GM12878 (cell line): ENCODE measurements at regions of chr10 and their contacts with region 1.

Region 1: DNA sequence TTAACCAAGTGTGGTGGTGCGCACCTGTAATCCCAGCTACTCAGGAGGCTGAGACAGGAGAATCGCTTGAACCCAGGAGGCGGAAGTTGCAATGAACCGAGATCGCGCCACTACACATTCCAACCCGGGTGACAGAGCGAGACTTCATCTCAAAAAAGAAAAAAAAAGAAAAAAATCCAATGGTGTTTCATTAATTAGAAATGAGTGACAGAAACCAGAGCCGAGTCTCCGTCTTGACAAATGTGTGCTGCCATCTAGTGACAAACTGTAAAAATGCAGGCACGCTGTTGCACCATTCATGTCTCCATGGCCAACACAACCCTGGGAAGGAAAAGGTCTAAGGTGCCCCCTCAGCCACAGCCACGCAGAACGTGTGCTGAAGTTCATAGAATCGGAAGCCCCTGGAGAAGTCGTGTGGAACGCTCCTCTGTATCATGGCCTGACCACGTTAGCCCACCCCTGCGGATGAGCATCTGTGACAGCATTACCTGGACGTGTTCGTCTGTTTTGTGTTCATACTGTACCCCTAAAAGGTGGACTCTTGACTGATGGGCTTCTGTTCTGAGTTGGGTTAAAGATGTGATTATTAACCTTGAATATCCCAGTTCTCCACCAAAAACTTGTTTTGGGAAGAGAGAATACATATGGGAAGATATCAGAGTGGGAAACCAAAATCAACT is 94.9 kb downstream of the LYZL2 start:
- DNase-seq: no peak
- ATAC-seq: peak; percentile 56
- H3K4me3 ChIP-seq: no peak overlapping the region
- H3K27ac ChIP-seq: no peak overlapping the region
- H3K4me1 ChIP-seq: peaks cover 6% of the 10 kb centered on the region
- H3K27me3 ChIP-seq: no peaks in the 10 kb centered on the region
- CTCF ChIP-seq: peak; percentile 80 to 88 (median 84)
- EP300 ChIP-seq: no peak
- POLR2A ChIP-seq: no peak
- RAD21 ChIP-seq: peak; percentile 96

Region 2: DNA sequence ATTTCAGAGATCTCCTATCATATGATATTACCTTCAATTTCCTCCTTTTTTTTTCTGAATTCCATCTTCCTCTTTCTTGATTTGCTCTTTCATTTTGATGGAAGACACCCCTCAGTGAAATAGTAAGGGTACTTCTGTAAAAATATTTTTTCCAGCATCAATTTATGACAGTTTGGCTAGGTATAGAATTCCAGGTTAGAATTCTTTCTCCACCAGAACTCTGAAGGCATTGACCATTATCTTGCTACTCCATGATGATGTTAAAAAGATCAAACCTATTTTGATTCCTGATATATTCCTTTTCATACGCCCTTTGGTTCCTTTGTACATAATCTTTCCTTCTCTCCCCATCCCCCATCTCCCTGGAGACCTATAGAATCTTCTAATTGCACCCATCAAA is 233.9 kb before region 1 on chr10:
- CTCF ChIA-PET with region 1: no interaction called
- POLR2A ChIA-PET with region 1: no interaction called
- RAD21 ChIA-PET with region 1: no interaction called
- SMC1A ChIA-PET with region 1: no interaction called
- in situ Hi-C with region 1: no loop called
- intact Hi-C with region 1: no loop called
- DNase-seq: no peak
- ATAC-seq: no peak
- H3K4me3 ChIP-seq: no peak overlapping the region
- H3K27ac ChIP-seq: no peak overlapping the region
- H3K4me1 ChIP-seq: no peaks in the 10 kb centered on the region
- H3K27me3 ChIP-seq: no peaks in the 10 kb centered on the region
- CTCF ChIP-seq: no peak
- EP300 ChIP-seq: no peak
- POLR2A ChIP-seq: no peak
- RAD21 ChIP-seq: no peak

Region 3: GRCh38 chr10:30313579-30314350 is 220.8 kb before region 1 on chr10:
- CTCF ChIA-PET with region 1: no interaction called
- POLR2A ChIA-PET with region 1: no interaction called
- RAD21 ChIA-PET with region 1: no interaction called
- SMC1A ChIA-PET with region 1: no interaction called
- in situ Hi-C with region 1: no loop called
- intact Hi-C with region 1: no loop called
- DNase-seq: no peak
- ATAC-seq: no peak
- H3K4me3 ChIP-seq: no peak overlapping the region
- H3K27ac ChIP-seq: no peak overlapping the region
- H3K4me1 ChIP-seq: no peaks in the 10 kb centered on the region
- H3K27me3 ChIP-seq: no peaks in the 10 kb centered on the region
- CTCF ChIP-seq: no peak
- EP300 ChIP-seq: no peak
- POLR2A ChIP-seq: no peak
- RAD21 ChIP-seq: no peak

Region 4: DNA sequence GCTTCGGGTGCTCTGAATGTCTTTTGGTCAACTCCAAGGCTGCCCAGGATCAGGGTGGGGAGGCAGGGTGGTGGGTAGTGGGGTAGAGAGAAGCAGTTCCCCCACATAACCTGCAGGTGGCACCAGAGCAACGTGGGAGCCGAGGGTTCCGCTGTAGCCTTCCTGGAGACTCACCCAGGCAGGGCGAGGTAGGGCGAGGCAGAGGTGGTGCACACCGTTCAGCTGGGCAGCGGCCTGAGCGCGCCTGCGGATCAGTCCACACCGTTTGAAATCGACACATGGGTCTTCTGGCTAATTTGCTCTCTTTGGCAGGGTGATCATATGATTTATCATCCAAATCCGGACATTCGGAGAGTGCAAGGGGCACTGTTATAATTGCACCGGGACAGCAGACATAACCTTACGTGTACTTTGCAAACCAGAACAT is 142.0 kb before region 1 on chr10:
- CTCF ChIA-PET with region 1: interaction called, 29 read pairs
- POLR2A ChIA-PET with region 1: interaction called, 6 read pairs
- RAD21 ChIA-PET with region 1: interaction called, 11 read pairs
- SMC1A ChIA-PET with region 1: interaction called, 38 read pairs
- in situ Hi-C with region 1: no loop called
- intact Hi-C with region 1: loop called (anchors 1 kb)
- DNase-seq: peak; percentile 31
- ATAC-seq: peak; percentile 100
- H3K4me3 ChIP-seq: no peak overlapping the region
- H3K27ac ChIP-seq: no peak overlapping the region
- H3K4me1 ChIP-seq: no peaks in the 10 kb centered on the region
- H3K27me3 ChIP-seq: no peaks in the 10 kb centered on the region
- CTCF ChIP-seq: peak; percentile 81 to 100 (median 97); a peak in 5 of 6 replicates
- EP300 ChIP-seq: no peak
- POLR2A ChIP-seq: no peak
- RAD21 ChIP-seq: peak; percentile 97

Region 5: GRCh38 chr10:30413996-30414576 is 120.5 kb before region 1 on chr10:
- CTCF ChIA-PET with region 1: interaction called, 217 read pairs
- POLR2A ChIA-PET with region 1: interaction called, 10 read pairs
- RAD21 ChIA-PET with region 1: interaction called, 198 read pairs
- SMC1A ChIA-PET with region 1: interaction called, 236 read pairs
- in situ Hi-C with region 1: loop called (anchors 5 kb)
- intact Hi-C with region 1: loop called (anchors 1 kb)
- DNase-seq: no peak
- ATAC-seq: peak; percentile 71
- H3K4me3 ChIP-seq: no peak overlapping the region
- H3K27ac ChIP-seq: no peak overlapping the region
- H3K4me1 ChIP-seq: peaks cover 28% of the 10 kb centered on the region
- H3K27me3 ChIP-seq: no peaks in the 10 kb centered on the region
- CTCF ChIP-seq: peak; percentile 78 to 87 (median 84)
- EP300 ChIP-seq: no peak
- POLR2A ChIP-seq: no peak
- RAD21 ChIP-seq: peak; percentile 97

Region 6: DNA sequence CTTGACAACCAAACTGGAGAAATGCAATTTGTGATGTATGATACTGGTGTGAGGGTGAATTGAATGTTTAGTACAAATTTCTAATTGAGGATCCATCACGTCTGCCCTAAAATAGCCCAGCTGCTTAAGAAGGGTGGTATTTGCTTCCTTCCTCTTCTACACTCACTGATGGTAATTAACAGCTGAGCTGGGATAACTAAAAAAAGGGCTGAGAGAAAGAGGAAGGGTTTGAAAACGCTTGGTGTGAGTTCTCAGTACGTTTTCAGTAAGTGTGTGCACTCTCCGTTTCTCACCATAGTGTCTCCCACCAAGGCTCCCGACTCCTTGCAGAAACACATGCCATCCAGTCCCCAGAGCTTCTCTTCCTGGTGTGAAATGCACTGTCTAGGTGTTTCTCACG is 46.3 kb before region 1 on chr10:
- CTCF ChIA-PET with region 1: interaction called, 36 read pairs
- POLR2A ChIA-PET with region 1: interaction called, 7 read pairs
- RAD21 ChIA-PET with region 1: interaction called, 165 read pairs
- SMC1A ChIA-PET with region 1: interaction called, 147 read pairs
- in situ Hi-C with region 1: no loop called
- intact Hi-C with region 1: no loop called
- DNase-seq: no peak
- ATAC-seq: peak; percentile 54
- H3K4me3 ChIP-seq: no peak overlapping the region
- H3K27ac ChIP-seq: peak overlapping the region; percentile 55
- H3K4me1 ChIP-seq: peaks cover 55% of the 10 kb centered on the region
- H3K27me3 ChIP-seq: no peaks in the 10 kb centered on the region
- CTCF ChIP-seq: no peak
- EP300 ChIP-seq: no peak
- POLR2A ChIP-seq: no peak
- RAD21 ChIP-seq: no peak

Region 7: GRCh38 chr10:30502266-30503060 is 32.1 kb before region 1 on chr10:
- CTCF ChIA-PET with region 1: interaction called, 41 read pairs
- POLR2A ChIA-PET with region 1: interaction called, 8 read pairs
- RAD21 ChIA-PET with region 1: interaction called, 165 read pairs
- SMC1A ChIA-PET with region 1: interaction called, 71 read pairs
- in situ Hi-C with region 1: no loop called
- intact Hi-C with region 1: loop called (anchors 2 kb)
- DNase-seq: no peak
- ATAC-seq: peak; percentile 81
- H3K4me3 ChIP-seq: peak overlapping the region; percentile 29; the same call in 1 of the 2 replicates
- H3K27ac ChIP-seq: peak overlapping the region; percentile 81
- H3K4me1 ChIP-seq: peaks cover 45% of the 10 kb centered on the region
- H3K27me3 ChIP-seq: no peaks in the 10 kb centered on the region
- CTCF ChIP-seq: no peak
- EP300 ChIP-seq: peak; percentile 56 to 60; a peak in 2 of 4 replicates
- POLR2A ChIP-seq: no peak
- RAD21 ChIP-seq: no peak

Region 8: DNA sequence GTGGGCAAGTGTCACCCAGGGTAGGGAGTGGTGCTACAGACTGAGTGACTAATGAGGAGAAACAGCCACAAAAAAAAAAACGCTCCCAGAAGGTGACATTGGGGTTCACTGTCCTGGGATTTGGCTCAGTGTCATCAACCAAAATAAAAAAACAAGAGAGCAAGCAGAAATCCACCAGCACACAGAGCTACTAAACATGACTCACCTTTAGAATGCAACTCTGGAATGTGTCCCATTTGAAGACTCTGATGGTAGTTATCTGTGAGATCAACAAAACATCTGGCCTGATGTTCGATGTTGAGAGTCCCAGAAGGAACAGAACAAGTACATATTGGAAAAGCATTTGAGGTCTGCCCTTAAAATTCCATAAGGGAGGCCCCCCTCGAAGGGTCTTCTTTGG is 295.3 kb after region 1 on chr10:
- CTCF ChIA-PET with region 1: no interaction called
- POLR2A ChIA-PET with region 1: no interaction called
- RAD21 ChIA-PET with region 1: no interaction called
- SMC1A ChIA-PET with region 1: no interaction called
- in situ Hi-C with region 1: no loop called
- intact Hi-C with region 1: no loop called
- DNase-seq: no peak
- ATAC-seq: no peak
- H3K4me3 ChIP-seq: no peak overlapping the region
- H3K27ac ChIP-seq: no peak overlapping the region
- H3K4me1 ChIP-seq: no peaks in the 10 kb centered on the region
- H3K27me3 ChIP-seq: no peaks in the 10 kb centered on the region
- CTCF ChIP-seq: no peak
- EP300 ChIP-seq: no peak
- POLR2A ChIP-seq: no peak
- RAD21 ChIP-seq: no peak